Body of pancreas (tissue), 4 donors: ENCODE measurements at regions of chr10 and their contacts with region 1.

Region 1: DNA sequence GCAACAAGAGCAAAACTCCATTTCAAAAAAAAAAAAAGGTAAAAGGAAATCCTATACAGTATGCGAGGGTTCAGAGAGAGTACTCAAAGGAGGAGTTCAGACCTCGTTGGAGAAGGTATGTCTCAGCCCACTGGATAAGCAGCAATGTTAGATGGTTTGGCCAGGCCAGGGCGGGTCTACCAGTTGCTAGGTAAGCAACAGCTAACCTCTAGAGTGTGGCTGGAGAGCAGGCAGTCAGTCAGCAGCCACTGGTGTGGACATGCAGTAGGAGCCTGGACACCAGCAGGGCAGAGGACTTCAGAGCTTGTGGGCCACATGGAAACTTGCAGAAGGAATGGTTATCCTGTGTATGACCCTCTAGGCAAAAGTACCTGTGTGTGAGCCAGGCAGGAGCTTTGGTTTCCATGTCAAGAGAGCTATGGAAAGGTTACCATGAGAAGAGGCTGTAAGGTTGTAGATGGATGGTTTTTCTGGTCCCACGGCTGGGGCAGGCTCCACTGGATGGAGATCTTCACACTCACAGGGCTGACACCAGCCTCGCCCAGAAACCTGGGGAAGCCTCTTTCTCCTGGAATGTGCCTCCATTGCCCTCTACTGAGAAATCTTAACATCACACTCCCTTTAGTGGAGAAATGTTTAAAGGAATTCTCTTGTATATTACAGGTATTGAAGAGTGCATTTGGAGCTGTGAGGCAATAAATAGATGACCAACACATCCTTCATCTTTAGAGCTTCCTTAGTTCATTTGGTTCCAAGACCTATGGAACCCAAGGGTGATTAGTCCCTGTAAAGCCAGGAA is 63.6 kb downstream of the CCDC186 start:
- DNase-seq: no peak
- ATAC-seq: no peak
- H3K4me3 ChIP-seq: no peak overlapping the region
- H3K27ac ChIP-seq: no peak overlapping the region
- H3K4me1 ChIP-seq: no peaks in the 10 kb centered on the region
- H3K27me3 ChIP-seq: no peaks in the 10 kb centered on the region
- CTCF ChIP-seq: peak in 4 of 7 experiments; percentile 26 to 30 (median 28)
- POLR2A ChIP-seq: no peak

Region 2: GRCh38 chr10:113939212-113939860 is 171.0 kb before region 1 on chr10:
- intact Hi-C with region 1: loop called (anchors 10 kb)
- DNase-seq: no peak
- ATAC-seq: no peak
- H3K4me3 ChIP-seq: no peak overlapping the region
- H3K27ac ChIP-seq: no peak overlapping the region
- H3K4me1 ChIP-seq: peaks cover 13% of the 10 kb centered on the region
- H3K27me3 ChIP-seq: no peaks in the 10 kb centered on the region
- CTCF ChIP-seq: peak in 1 of 7 experiments; percentile 4
- POLR2A ChIP-seq: no peak